IMR-90 (cell line): ENCODE measurements at regions of chr3 and their contacts with region 1.

Region 1: DNA sequence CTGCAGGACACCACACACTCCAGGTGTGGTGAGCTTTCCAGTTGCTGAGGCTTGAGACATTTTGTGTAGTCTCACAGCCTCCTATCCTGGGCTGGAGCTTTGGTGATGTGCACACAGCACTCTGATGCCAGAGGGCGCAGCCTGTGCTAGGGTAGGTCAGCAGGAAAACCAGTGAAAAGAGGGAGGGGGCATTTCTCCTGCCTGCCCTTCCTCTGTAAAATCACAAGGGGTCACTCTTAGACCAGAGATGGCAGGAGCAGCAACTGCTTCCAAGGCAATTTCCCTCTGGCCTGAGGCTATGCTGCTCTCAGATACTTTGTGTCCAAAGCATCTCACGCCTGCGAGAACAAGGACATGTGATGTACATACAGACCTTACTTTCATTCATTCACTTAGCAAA is 16.5 kb upstream of the MUSTN1 start:
- DNase-seq: peak; percentile 49
- ATAC-seq: peak; percentile 74
- H3K4me3 ChIP-seq: no peak overlapping the region
- H3K27ac ChIP-seq: no peak overlapping the region
- H3K4me1 ChIP-seq: peaks cover 7% of the 10 kb centered on the region; the same call in 1 of the 2 replicates
- H3K27me3 ChIP-seq: no peaks in the 10 kb centered on the region
- CTCF ChIP-seq: peak; percentile 74
- POLR2A ChIP-seq: no peak
- RAD21 ChIP-seq: peak; percentile 85

Region 2: DNA sequence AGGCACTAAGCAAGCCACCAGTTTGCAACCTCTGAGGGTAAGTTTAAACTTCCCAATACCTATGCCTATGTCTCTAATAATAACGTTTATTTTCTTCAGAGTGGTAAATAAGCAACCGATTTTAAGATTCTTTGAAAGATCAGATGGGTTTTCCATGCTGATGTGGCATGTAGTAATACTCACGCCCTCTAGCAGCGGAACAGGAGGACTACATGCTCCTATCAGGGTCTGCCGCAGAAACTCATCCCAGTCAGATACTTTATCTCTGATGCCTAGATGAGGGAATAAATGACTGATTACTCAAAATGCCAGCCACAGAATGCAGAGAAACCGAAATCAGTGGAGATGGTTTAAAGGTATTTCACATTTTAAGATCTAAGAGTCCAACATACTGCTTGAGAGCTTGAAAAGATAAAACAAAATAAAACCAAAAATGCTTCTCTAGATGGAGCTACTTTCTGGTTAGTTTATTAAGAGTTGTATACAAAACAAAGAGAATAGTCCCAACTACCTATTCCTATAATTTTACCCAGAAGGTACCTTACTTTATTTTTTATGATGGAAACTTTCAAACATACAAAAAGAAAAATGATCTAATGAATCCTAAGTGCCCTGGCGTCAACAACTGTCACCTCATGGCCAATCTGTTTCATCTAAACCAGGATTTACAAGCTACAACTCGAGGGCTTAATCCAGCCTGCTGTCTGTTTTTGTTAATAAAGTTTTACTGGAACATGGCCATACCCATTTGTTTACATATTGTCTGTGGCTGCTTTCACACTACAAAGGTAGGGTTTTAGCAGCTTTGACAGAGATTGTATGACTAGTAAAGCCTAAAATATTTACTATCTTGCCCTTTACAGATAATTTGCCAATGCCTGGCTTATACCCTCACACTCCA is 83.5 kb after region 1 on chr3:
- CTCF ChIA-PET with region 1: interaction called, 5 read pairs
- POLR2A ChIA-PET with region 1: no interaction called
- dilution Hi-C with region 1: no loop called
- in situ Hi-C with region 1: no loop called
- intact Hi-C with region 1: loop called (anchors 1 kb)
- DNase-seq: peak; percentile 64
- ATAC-seq: peak; percentile 97
- H3K4me3 ChIP-seq: no peak overlapping the region
- H3K27ac ChIP-seq: no peak overlapping the region
- H3K4me1 ChIP-seq: no peaks in the 10 kb centered on the region
- H3K27me3 ChIP-seq: no peaks in the 10 kb centered on the region
- CTCF ChIP-seq: peak; percentile 71
- POLR2A ChIP-seq: no peak
- RAD21 ChIP-seq: peak; percentile 66

Region 3: DNA sequence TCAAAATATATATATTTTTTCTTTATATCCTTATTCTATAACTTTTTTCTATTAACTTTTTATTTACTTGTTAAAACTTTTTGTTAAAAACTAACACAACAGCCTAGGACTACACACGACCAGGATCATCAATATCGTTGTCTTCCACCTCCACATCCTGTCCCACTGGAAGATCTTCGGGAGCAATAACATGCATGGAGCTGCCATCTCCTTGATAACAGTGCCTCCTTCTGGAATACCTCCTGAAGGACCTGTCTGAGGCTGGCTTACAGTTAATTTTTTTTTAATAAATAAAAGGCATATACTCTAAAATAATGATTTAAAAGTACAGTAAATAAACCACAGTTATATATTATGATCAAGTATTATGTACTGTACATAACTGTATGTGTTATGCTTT is 135.6 kb after region 1 on chr3:
- CTCF ChIA-PET with region 1: interaction called, 3 read pairs
- POLR2A ChIA-PET with region 1: no interaction called
- dilution Hi-C with region 1: no loop called
- in situ Hi-C with region 1: no loop called
- intact Hi-C with region 1: loop called (anchors 1 kb)
- DNase-seq: peak; percentile 70
- ATAC-seq: peak; percentile 68
- H3K4me3 ChIP-seq: no peak overlapping the region
- H3K27ac ChIP-seq: no peak overlapping the region
- H3K4me1 ChIP-seq: no peaks in the 10 kb centered on the region
- H3K27me3 ChIP-seq: no peaks in the 10 kb centered on the region
- CTCF ChIP-seq: peak; percentile 67
- POLR2A ChIP-seq: no peak
- RAD21 ChIP-seq: peak; percentile 81

Region 4: DNA sequence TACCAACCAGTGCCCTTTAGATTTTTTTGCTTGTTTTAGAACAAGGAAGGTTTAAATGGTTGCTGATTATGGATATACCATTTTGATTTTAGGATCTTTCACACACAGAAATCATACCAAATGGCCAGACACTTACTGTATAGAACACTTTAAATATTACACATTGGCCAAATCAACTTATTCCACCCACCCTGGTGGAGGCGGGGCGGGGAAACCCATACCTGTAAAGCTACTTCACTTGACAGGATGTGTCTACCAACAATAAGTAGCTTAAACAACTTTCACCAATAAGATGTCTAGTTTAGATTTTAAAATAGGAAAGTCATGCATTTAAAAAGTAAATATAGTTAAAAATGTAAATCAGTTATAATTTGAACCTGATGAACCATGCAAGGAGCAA is 211.6 kb after region 1 on chr3:
- CTCF ChIA-PET with region 1: no interaction called
- POLR2A ChIA-PET with region 1: no interaction called
- dilution Hi-C with region 1: no loop called
- in situ Hi-C with region 1: loop called (anchors 5 kb)
- intact Hi-C with region 1: no loop called
- DNase-seq: no peak
- ATAC-seq: no peak
- H3K4me3 ChIP-seq: no peak overlapping the region
- H3K27ac ChIP-seq: no peak overlapping the region
- H3K4me1 ChIP-seq: no peaks in the 10 kb centered on the region
- H3K27me3 ChIP-seq: peaks cover 13% of the 10 kb centered on the region
- CTCF ChIP-seq: no peak
- POLR2A ChIP-seq: no peak
- RAD21 ChIP-seq: no peak

Region 5: GRCh38 chr3:53072653-53073552 is 221.6 kb after region 1 on chr3:
- CTCF ChIA-PET with region 1: no interaction called
- POLR2A ChIA-PET with region 1: no interaction called
- dilution Hi-C with region 1: no loop called
- in situ Hi-C with region 1: no loop called
- intact Hi-C with region 1: loop called (anchors 1 kb)
- DNase-seq: peak; percentile 63
- ATAC-seq: peak; percentile 97
- H3K4me3 ChIP-seq: no peak overlapping the region
- H3K27ac ChIP-seq: no peak overlapping the region
- H3K4me1 ChIP-seq: peaks cover 3% of the 10 kb centered on the region; the same call in 1 of the 2 replicates
- H3K27me3 ChIP-seq: peaks cover 2% of the 10 kb centered on the region; the same call in 1 of the 2 replicates
- CTCF ChIP-seq: peak; percentile 81
- POLR2A ChIP-seq: no peak
- RAD21 ChIP-seq: peak; percentile 82

Region 6: DNA sequence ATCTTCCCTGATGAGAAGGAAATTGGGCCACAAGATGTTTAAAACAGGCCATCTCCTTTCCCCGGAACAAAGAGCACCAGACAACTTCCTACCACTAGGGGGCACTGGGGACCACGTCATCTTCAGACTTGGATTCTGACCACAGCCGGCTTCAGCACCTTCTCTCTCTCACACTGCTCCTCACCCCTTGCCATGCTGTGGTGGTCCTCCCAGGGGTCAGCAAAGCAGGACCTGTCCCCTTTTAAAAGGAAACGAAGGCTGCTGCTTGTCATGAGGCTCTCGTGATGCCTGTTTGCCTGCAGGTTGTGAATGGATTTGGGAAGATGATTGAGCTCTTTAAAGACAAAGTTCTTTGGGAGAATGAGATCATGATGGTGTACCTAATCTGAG is 262.7 kb after region 1 on chr3:
- CTCF ChIA-PET with region 1: no interaction called
- POLR2A ChIA-PET with region 1: no interaction called
- dilution Hi-C with region 1: no loop called
- in situ Hi-C with region 1: no loop called
- intact Hi-C with region 1: loop called (anchors 2 kb)
- DNase-seq: peak; percentile 78
- ATAC-seq: peak; percentile 90
- H3K4me3 ChIP-seq: no peak overlapping the region
- H3K27ac ChIP-seq: peak overlapping the region; percentile 8; the same call in 1 of the 2 replicates
- H3K4me1 ChIP-seq: peaks cover 12% of the 10 kb centered on the region
- H3K27me3 ChIP-seq: no peaks in the 10 kb centered on the region
- CTCF ChIP-seq: peak; percentile 92
- POLR2A ChIP-seq: no peak
- RAD21 ChIP-seq: peak; percentile 92

Region 7: GRCh38 chr3:53311882-53312281 is 460.5 kb after region 1 on chr3:
- CTCF ChIA-PET with region 1: no interaction called
- POLR2A ChIA-PET with region 1: no interaction called
- dilution Hi-C with region 1: no loop called
- in situ Hi-C with region 1: no loop called
- intact Hi-C with region 1: no loop called
- DNase-seq: no peak
- ATAC-seq: no peak
- H3K4me3 ChIP-seq: no peak overlapping the region
- H3K27ac ChIP-seq: no peak overlapping the region
- H3K4me1 ChIP-seq: 0 out of 2 replicates have a peak, but pooled peaks cover 2% of the 10 kb centered on the region
- H3K27me3 ChIP-seq: no peaks in the 10 kb centered on the region
- CTCF ChIP-seq: no peak
- POLR2A ChIP-seq: no peak
- RAD21 ChIP-seq: no peak